Ascending aorta (tissue), 2 donors: ENCODE measurements at regions of chr6 and their contacts with region 1.

Region 1: DNA sequence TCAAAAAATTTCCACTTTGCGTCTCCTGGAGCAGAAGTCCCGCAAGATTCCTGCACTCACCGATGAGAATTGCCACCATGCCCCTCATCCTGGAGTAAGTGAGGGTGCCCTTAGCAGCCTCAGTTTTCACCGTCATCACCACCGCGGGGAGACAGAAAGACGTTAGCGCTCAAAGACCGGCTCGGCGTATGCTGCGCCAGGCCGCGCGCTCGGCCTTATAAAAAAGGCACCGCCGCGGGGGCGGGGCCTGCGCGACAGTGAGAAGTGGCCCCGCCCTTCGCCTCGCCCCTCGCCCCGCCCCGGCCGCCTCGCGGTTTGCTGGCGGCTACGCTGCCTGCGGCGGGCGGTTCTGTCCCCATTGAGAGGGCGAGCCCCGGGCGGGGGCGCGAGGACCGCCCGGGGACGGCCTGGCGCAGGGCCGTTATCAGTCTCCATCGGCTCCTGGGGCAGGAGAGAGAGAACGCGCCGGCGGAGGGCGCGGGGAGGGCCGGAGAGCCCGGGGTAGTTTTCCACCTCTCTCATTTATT is 122.3 kb upstream of the SLC2A12 start:
- DNase-seq: peak; percentile 75 to 96
- H3K4me3 ChIP-seq: peak overlapping the region; percentile 79 to 90
- H3K27ac ChIP-seq: peak overlapping the region; percentile 99 to 100
- H3K4me1 ChIP-seq: peaks cover 0 to 33% of the 10 kb centered on the region in 2 donors
- H3K27me3 ChIP-seq: no peaks in the 10 kb centered on the region
- CTCF ChIP-seq: no peak

Region 2: GRCh38 chr6:132512638-132513632 is 1661.8 kb before region 1 on chr6 and contains the start of gene STX7:
- intact Hi-C with region 1: loop called (anchors 10 kb)
- DNase-seq: peak; percentile 74 to 93
- H3K4me3 ChIP-seq: peak within 1 kb of the TSS; percentile 69 to 83
- H3K27ac ChIP-seq: peak within 1 kb of the TSS; percentile 74 to 88
- H3K4me1 ChIP-seq: peaks cover 10 to 31% of the 10 kb centered on the region in 2 donors
- H3K27me3 ChIP-seq: no peaks in the 10 kb centered on the region
- CTCF ChIP-seq: no peak
- total RNA-seq, gene STX7: 18.3 TPM

Region 3: DNA sequence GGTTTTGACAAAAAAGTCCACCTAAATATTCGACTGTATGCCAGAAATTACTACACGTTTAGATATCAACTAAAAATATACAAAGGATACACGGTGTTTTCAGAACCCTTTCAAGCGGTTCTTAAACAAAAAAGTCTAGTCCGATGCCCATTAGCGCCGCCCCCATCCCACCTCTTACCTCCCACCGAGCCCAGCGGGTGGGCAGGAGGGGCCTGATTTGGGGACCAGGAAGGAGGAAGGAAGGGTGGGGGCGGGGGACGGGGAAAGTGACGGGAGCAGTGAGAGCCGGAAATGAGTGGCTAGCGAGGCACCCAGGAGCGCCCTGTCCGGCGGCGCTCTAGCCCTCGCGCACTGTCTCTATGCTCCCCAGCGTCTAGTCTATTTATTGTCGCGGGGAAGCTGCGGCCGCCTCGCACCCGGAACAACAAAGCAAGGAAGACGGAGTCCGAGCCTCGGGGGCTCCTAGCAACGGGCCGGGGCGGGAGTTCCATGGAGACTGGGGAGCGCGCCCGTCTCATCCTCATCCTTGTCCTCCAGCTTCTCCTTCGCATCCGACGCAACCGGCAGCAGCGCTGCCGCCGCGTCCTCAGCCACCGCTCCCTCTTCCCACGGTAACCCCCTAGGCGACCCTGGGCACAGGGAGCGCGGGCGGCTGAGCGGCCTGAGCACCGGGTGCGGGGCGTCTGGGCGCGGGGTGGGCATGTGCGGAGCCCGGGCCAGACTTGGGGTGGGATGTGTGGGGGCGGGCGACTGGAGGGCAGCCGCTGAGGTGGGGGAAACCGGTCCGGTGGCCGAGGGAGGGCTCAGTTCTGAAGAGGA is 221.7 kb before region 1 on chr6 and contains the start of gene TBPL1:
- intact Hi-C with region 1: loop called (anchors 10 kb)
- DNase-seq: peak; percentile 85 to 97
- H3K4me3 ChIP-seq: peak within 1 kb of the TSS; percentile 78 to 83
- H3K27ac ChIP-seq: peak within 1 kb of the TSS; percentile 96 to 97
- H3K4me1 ChIP-seq: peaks cover 0 to 9% of the 10 kb centered on the region in 2 donors
- H3K27me3 ChIP-seq: no peaks in the 10 kb centered on the region
- CTCF ChIP-seq: no peak
- total RNA-seq, gene TBPL1: 23.1 TPM

Region 4: GRCh38 chr6:134373282-134373922 is 198.7 kb after region 1 on chr6:
- intact Hi-C with region 1: loop called (anchors 2 kb)
- DNase-seq: peak; percentile 68 to 88
- H3K4me3 ChIP-seq: no peak overlapping the region
- H3K27ac ChIP-seq: peak overlapping the region; percentile 58 to 71
- H3K4me1 ChIP-seq: peaks cover 7 to 15% of the 10 kb centered on the region in 2 donors
- H3K27me3 ChIP-seq: no peaks in the 10 kb centered on the region
- CTCF ChIP-seq: no peak

Region 5: DNA sequence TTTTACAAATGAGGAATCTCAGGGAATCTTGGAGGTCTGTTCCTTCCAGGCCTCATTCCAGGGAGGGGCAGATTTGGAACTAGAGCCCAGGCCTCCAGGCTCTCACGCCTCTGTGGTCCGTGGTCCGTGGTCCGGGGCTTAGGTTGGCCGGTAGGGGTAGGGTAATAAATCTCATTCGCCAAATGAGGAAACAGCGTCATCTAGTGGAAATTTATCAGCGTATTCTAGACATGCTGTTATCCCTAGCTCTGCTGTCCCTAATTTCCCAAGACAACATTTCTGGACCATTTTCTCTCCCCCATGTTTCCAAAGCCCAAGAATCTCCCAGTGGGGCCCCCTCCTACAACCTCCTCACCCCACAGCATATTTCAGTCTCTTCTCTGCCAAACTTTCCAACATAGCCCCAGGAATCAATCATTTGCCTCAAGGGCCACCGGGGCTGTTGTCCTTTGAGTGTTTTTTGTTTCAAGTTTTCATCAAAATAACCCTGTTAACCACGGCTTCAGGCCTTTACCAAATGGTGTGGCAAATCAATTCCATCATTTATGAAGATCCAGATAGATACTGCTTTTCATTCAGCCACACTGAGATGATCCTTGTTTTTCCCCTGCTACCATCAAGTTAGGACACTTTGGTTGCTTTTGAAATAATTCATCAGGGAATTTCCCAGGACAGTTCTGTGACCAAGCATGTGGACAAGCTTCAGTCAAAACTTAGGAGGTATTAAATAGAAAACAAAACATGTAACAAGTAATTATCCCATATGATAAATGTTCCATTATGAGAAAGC is 648.4 kb after region 1 on chr6:
- intact Hi-C with region 1: loop called (anchors 1 kb)
- DNase-seq: no peak
- H3K4me3 ChIP-seq: no peak overlapping the region
- H3K27ac ChIP-seq: no peak overlapping the region
- H3K4me1 ChIP-seq: peaks cover 0 to 6% of the 10 kb centered on the region in 2 donors
- H3K27me3 ChIP-seq: no peaks in the 10 kb centered on the region
- CTCF ChIP-seq: peak; percentile 80 to 82 (median 82)

Region 6: GRCh38 chr6:134908906-134909516 is 734.3 kb after region 1 on chr6:
- intact Hi-C with region 1: loop called (anchors 2 kb)
- DNase-seq: peak in 1 of 2 donors; percentile 90
- H3K4me3 ChIP-seq: peak overlapping the region; percentile 19 to 48
- H3K27ac ChIP-seq: peak overlapping the region; percentile 34 to 41
- H3K4me1 ChIP-seq: no peaks in the 10 kb centered on the region
- H3K27me3 ChIP-seq: no peaks in the 10 kb centered on the region
- CTCF ChIP-seq: no peak

Region 7: GRCh38 chr6:135054569-135055498 is 880.1 kb after region 1 on chr6 and contains the start of gene HBS1L:
- intact Hi-C with region 1: loop called (anchors 5 kb)
- DNase-seq: peak; percentile 84 to 98
- H3K4me3 ChIP-seq: peak within 1 kb of the TSS; percentile 87 to 94
- H3K27ac ChIP-seq: peak within 1 kb of the TSS; percentile 87 to 90
- H3K4me1 ChIP-seq: no peaks in the 10 kb centered on the region
- H3K27me3 ChIP-seq: no peaks in the 10 kb centered on the region
- CTCF ChIP-seq: no peak
- total RNA-seq, gene HBS1L: 9.8 TPM